ENCODE measurements at regions of chr16 and their contacts with region 1.

Region 1: DNA sequence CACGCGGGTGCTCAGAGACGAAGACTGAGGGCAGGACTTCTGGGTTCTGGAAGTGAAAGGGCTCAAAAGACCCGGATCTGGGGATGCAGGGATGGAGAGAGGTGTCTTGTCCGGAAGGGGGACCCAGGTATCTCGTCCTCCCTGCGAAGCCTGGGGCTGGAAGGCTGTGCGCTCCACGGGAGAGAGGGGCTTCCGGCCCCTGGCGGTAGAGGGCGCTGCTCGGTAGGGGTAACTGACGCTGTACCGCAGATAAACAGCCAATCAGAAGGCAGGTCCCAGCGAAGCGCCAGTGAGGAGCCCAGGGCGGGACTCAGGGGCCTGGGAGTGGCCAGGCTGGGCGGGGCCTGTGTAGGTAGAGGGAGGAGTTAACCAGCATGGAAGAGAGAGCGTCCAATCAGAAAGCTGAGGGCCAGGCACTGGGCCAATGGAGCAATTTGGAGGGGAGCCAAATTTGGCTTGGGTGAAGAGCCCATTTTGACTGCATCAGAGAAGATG is 804 bp downstream of the TGFB1I1 start:
- DNase-seq: peak; percentile 60 to 81
- ATAC-seq: peak; percentile 79 to 82
- H3K4me3 ChIP-seq: peak overlapping the region; percentile 63 to 76 (median 67)
- H3K27ac ChIP-seq: peak overlapping the region; percentile 83 to 89 (median 87)
- H3K4me1 ChIP-seq: peaks cover 0 to 11% of the 10 kb centered on the region in 2 donors
- H3K27me3 ChIP-seq: peaks cover 4 to 21% (median 5%) of the 10 kb centered on the region in 3 donors
- CTCF ChIP-seq: peak; percentile 65 to 80 (median 68)
- POLR2A ChIP-seq: no peak

Region 2: DNA sequence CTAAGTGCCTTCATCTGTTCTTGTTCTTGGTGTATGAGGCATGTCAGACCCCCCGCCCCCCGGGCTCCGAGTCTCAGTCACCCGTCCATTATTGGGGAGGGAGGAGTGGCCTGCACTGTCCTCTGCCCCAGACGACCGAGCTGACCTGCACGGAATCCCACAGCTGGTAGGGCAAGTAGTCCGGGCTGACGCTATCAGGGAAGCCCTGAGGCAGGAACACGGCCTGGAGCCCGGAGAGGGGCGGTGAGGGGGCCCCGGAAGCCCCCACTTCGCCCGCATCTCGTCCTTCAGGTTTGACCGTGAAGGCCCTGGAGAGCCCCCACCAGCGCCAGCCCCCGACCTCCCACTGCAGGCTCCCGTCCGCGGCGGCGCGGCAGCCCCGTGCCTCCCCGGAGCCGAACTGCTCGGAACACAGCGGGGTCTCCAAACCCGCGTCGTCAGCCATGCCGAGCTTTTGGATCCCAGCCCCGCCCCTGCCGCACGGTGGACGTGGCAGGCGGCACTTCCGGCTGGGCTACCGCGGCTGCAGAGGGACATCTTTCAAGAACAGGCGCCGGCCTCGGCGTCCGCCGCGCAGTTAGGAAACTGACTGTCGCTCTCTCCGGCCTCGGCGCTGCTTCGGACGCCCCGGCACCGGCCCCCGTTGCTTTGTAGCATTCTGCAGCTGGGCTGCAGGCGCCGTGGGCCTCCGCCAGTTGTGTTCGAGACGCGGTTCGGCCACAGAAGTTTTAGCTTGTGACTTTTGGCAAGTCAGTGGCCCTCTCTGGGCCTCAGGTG is 35.4 kb after region 1 on chr16 and contains the start of gene RUSF1:
- in situ Hi-C with region 1: no loop called
- intact Hi-C with region 1: loop called (anchors 2 kb)
- DNase-seq: peak; percentile 86 to 88
- ATAC-seq: peak; percentile 94 to 95
- H3K4me3 ChIP-seq: peak within 1 kb of the TSS; percentile 74 to 98 (median 87)
- H3K27ac ChIP-seq: peak within 1 kb of the TSS; percentile 88 to 93 (median 91)
- H3K4me1 ChIP-seq: peaks cover 24 to 28% of the 10 kb centered on the region in 2 donors
- H3K27me3 ChIP-seq: no peaks in the 10 kb centered on the region
- CTCF ChIP-seq: peak in 1 of 5 experiments; percentile 12
- POLR2A ChIP-seq: peak; percentile 86 to 89
- total RNA-seq, gene RUSF1: 6.7 to 15.1 (median 8.5) TPM